ENCODE measurements at regions of chr16 and their contacts with region 1.

Region 1: DNA sequence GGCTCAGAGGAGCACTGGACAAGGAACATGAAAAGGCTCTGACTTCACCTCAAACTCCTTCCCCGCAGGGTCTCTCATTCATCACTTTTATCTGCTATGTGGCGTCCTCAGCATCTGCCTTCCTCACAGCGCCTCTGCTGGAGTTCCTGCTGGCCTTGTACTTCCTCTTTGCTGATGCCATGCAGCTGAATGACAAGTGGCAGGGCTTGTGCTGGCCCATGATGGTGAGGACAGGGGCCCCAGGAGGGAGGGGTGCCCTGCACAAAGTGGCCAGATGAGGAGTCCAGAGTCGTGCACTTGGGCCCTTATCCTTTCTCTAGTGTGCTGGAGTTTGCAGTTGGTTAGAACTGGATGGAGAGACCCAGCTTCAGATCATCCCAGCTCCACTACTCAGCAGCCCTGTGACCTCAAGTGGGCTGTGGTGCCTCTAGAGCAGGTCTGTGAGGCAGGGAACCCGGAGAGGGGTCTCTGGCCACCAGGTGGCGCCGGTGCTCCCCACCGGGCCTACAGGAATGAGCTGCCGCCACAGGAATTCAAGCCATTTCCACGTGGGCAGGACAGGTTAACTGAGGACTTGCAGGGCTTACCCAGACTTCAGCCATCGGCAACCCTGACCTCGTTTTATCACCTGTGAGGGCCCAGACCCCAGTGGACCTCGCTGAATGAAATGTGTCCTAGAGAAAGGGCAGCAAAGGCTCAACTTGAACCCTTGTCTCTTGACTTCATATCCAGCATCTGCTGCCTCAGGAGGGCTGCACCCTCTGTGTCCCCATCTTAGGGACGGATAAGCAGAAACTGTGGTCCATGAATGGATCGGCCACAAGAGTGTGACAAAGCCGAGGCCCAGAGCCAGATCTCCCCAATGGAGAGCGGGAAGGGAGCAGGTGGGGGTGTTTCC is 4.0 kb downstream of the CMTM3 start:
- DNase-seq: peak; percentile 90
- CTCF ChIP-seq: peak; percentile 86

Region 2: GRCh38 chr16:66406534-66407221 is 201.8 kb before region 1 on chr16:
- CTCF ChIA-PET with region 1: interaction called, 23 read pairs
- POLR2A ChIA-PET with region 1: no interaction called
- DNase-seq: peak; percentile 89
- CTCF ChIP-seq: peak; percentile 88

Region 3: DNA sequence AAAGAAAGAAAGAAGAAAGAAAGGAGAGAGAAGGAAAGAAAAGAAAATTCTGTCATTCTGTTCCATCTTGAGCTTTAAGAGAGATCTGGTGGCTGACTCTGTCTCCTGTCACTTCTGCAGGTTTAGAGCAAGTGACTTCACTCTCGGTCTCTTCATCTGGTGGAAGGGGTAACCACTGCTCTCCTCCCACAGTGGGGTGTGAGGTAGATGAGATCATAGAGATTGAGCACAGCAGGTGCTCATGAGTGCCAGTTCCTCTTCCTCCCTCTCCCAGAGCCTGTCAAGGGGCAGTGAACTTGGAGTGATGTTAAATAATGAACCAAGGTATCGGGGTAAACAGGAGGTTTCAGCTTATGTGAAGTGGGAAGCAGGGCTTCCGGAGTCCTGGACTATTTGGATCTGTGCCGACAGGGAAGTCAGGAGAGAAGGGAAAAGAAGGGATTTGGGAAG is 133.7 kb before region 1 on chr16:
- CTCF ChIA-PET with region 1: interaction called, 13 read pairs
- POLR2A ChIA-PET with region 1: no interaction called
- DNase-seq: peak; percentile 80
- CTCF ChIP-seq: no peak

Region 4: GRCh38 chr16:66521951-66522771 is 86.3 kb before region 1 on chr16:
- CTCF ChIA-PET with region 1: interaction called, 10 read pairs
- POLR2A ChIA-PET with region 1: no interaction called
- DNase-seq: peak; percentile 60
- CTCF ChIP-seq: no peak

Region 5: DNA sequence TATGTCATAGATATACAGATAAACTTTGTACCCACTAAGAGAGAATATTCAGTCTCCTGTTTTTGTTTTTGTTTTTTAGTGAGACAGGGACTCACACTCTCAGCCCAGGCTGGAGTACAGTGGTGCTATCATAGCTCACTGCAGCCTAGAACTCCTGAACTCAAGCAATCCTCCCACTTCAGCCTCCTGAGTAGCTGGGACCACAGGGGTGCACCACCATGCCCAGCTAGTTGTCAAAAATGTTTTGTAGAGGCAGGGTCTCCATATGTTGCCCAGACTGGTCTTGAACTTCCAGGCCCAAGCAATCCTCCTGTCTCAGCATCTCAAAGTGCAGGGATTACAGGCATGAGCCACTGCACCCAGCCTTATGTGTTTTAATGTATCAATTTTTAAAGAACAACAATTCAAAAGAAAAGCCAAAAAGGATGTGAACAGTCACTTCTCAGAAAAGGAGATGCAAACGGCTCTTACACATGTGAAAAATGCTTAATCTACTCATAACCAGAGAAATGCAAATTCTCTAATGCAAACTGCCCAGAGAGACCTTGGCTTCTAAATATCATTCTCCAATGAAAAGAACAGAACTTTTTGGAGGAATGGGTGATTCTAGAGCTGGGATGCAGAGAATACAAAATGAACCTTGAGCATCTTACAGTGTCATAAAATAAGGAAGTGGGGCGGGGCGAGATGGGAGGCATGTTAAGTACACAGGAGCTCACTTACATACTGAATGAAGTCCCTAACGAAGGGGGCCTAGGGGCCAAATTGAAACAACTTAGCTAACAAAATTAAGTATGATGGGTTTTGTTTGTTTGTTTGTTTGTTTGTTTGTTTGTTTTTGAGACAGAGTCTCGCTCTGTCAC is 11.3 kb before region 1 on chr16:
- CTCF ChIA-PET with region 1: interaction called, 32 read pairs
- POLR2A ChIA-PET with region 1: no interaction called
- DNase-seq: no peak
- CTCF ChIP-seq: no peak

Region 6: DNA sequence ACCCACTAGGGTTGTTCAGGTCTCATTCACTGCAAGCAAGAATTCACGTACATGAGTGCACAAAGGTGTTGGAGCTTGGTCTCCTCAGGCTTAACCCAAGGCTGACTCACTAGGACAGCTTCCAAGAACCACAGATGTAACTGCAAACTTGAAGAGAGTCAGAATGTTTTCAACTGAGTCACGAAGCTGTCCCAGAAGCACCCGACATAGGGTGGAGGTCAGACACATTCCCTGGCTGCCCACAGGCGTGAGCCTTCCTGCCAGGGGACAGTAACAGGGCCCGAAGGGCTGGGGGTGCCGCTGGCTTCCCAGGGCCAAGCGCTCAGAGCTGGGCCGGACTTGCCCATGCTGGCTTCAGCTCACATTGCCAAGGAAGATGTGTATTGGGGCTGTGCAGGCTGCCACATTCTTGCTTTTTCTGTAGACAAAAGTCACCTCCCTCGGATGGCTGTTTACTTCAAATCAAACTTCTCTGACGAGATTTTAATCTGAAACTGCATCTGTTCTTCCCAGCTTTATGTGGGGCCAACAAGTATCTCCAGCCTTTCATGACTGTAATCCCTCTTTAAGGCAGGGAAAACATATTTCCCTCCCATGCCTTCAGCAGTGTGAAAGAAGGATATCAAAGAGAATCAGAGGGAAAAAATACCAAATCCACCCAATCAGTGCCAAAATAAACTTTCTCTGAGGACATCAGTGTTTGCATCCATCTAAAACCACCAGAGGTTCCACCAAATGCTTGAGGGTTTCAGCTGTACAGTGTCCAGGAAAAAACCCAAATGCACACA is 10.3 kb after region 1 on chr16:
- CTCF ChIA-PET with region 1: interaction called, 38 read pairs
- POLR2A ChIA-PET with region 1: no interaction called
- DNase-seq: no peak
- CTCF ChIP-seq: no peak

Region 7: DNA sequence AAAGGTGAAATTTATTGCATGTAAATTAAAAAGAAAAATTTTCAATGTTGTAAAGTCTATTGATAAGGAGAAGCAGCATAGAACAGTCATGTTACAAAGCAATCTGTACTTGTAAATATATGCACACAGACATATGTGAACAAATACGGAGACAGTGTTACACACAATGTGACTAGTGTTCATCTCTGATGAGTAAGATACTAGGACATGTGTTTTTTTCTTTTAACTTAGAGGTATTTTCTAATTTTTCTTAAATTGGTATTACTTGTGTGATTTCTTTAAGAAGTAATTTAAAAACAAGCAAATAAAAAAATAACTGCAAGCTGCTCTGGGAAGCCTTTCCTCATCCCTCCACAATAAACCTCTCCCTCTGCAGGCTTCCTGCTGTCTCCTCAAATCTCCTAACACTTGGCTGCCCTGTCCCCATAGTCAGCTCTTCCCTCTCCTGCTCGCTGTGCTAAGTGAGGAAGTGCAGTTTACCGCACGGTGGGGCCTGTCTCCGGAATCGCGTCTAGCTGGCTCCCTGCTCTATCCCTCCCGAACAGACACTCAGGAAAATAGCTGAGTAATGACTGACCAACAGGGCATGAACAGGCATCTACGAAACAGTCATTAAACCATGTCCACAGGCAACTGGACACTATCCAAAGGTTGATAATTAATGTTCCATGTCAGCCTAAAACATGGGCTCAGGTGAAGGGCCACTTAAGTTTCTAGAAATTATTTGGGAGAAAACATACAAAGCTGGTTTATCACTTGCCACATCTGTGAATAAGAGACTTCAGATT is 52.1 kb after region 1 on chr16:
- CTCF ChIA-PET with region 1: interaction called, 11 read pairs
- POLR2A ChIA-PET with region 1: no interaction called
- DNase-seq: no peak
- CTCF ChIP-seq: no peak

Measured in GM10248 (cell line).